Caco-2 (cell line): ENCODE measurements at regions of chr12 and their contacts with region 1.

Region 1: GRCh38 chr12:21169878-21170472 is 39.0 kb downstream of the SLCO1B1 start:
- DNase-seq: peak; percentile 67 to 81
- H3K4me3 ChIP-seq: no peak overlapping the region
- H3K4me3 Mint-ChIP-seq: no peak overlapping the region
- H3K27ac Mint-ChIP-seq: no peak overlapping the region
- H3K4me1 ChIP-seq: no peaks in the 10 kb centered on the region
- H3K4me1 Mint-ChIP-seq: no peaks in the 10 kb centered on the region
- H3K27me3 ChIP-seq: no peaks in the 10 kb centered on the region
- H3K27me3 Mint-ChIP-seq: peaks cover 3% of the 10 kb centered on the region
- CTCF ChIP-seq: peak; percentile 76 to 96

Region 2: GRCh38 chr12:20681334-20681733 is 488.6 kb before region 1 on chr12:
- CTCF ChIA-PET with region 1: no interaction called
- POLR2A ChIA-PET with region 1: no interaction called
- intact Hi-C with region 1: loop called (anchors 1 kb)
- DNase-seq: no peak
- H3K4me3 ChIP-seq: no peak overlapping the region
- H3K4me3 Mint-ChIP-seq: no peak overlapping the region
- H3K27ac Mint-ChIP-seq: no peak overlapping the region
- H3K4me1 ChIP-seq: no peaks in the 10 kb centered on the region
- H3K4me1 Mint-ChIP-seq: no peaks in the 10 kb centered on the region
- H3K27me3 ChIP-seq: no peaks in the 10 kb centered on the region
- H3K27me3 Mint-ChIP-seq: peaks cover 2% of the 10 kb centered on the region
- CTCF ChIP-seq: no peak

Region 3: GRCh38 chr12:20696181-20696905 is 473.6 kb before region 1 on chr12:
- CTCF ChIA-PET with region 1: no interaction called
- POLR2A ChIA-PET with region 1: no interaction called
- intact Hi-C with region 1: no loop called
- DNase-seq: no peak
- H3K4me3 ChIP-seq: no peak overlapping the region
- H3K4me3 Mint-ChIP-seq: no peak overlapping the region
- H3K27ac Mint-ChIP-seq: no peak overlapping the region
- H3K4me1 ChIP-seq: no peaks in the 10 kb centered on the region
- H3K4me1 Mint-ChIP-seq: no peaks in the 10 kb centered on the region
- H3K27me3 ChIP-seq: no peaks in the 10 kb centered on the region
- H3K27me3 Mint-ChIP-seq: peaks cover 6% of the 10 kb centered on the region
- CTCF ChIP-seq: no peak

Region 4: DNA sequence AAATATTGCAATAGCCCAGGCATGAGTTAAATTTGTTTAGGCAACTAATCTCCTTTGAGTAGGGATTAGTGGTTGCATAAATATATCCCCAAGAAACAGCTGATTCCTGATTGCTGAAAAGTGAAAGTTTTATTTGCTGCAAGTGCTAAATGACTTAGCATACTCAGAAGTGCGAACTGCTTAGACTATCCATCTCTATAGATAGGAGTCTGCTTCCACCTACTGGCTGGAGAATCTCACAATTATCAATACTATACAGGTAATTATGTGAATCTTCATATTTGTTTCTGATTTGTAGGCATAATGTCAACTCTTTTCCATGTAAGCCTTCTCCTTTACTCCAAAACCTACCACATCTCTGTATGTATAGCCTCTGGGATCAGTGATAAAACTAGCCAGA is 371.4 kb before region 1 on chr12:
- CTCF ChIA-PET with region 1: no interaction called
- POLR2A ChIA-PET with region 1: no interaction called
- intact Hi-C with region 1: loop called (anchors 1 kb)
- DNase-seq: peak in 1 of 2 experiments; percentile 37
- H3K4me3 ChIP-seq: no peak overlapping the region
- H3K4me3 Mint-ChIP-seq: no peak overlapping the region
- H3K27ac Mint-ChIP-seq: no peak overlapping the region
- H3K4me1 ChIP-seq: no peaks in the 10 kb centered on the region
- H3K4me1 Mint-ChIP-seq: no peaks in the 10 kb centered on the region
- H3K27me3 ChIP-seq: no peaks in the 10 kb centered on the region
- H3K27me3 Mint-ChIP-seq: no peaks in the 10 kb centered on the region
- CTCF ChIP-seq: peak; percentile 56

Region 5: DNA sequence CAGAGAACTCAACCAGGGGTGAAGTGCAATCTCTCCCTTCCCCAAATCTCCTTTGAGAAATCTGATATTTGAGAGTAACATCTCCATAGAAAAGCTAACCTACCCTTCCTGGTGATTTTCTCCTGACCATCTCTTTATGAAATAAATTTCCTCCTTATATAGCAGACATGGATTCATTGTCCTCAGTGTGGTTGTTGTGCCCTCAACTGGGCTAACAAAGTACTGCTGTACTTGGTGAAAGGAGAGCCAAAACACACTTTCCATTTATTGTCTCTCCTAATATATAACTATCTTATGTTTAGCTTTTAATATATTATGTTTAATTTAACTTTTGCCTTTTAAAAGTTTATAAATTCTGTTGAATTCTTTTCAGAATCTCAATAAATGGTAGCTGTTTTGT is 104.1 kb before region 1 on chr12:
- CTCF ChIA-PET with region 1: no interaction called
- POLR2A ChIA-PET with region 1: no interaction called
- intact Hi-C with region 1: loop called (anchors 1 kb)
- DNase-seq: peak in 1 of 2 experiments; percentile 33
- H3K4me3 ChIP-seq: no peak overlapping the region
- H3K4me3 Mint-ChIP-seq: no peak overlapping the region
- H3K27ac Mint-ChIP-seq: no peak overlapping the region
- H3K4me1 ChIP-seq: no peaks in the 10 kb centered on the region
- H3K4me1 Mint-ChIP-seq: no peaks in the 10 kb centered on the region
- H3K27me3 ChIP-seq: no peaks in the 10 kb centered on the region
- H3K27me3 Mint-ChIP-seq: peaks cover 10% of the 10 kb centered on the region
- CTCF ChIP-seq: peak; percentile 41 to 64